ENCODE measurements at regions of chr11 and their contacts with region 1.

Region 1: DNA sequence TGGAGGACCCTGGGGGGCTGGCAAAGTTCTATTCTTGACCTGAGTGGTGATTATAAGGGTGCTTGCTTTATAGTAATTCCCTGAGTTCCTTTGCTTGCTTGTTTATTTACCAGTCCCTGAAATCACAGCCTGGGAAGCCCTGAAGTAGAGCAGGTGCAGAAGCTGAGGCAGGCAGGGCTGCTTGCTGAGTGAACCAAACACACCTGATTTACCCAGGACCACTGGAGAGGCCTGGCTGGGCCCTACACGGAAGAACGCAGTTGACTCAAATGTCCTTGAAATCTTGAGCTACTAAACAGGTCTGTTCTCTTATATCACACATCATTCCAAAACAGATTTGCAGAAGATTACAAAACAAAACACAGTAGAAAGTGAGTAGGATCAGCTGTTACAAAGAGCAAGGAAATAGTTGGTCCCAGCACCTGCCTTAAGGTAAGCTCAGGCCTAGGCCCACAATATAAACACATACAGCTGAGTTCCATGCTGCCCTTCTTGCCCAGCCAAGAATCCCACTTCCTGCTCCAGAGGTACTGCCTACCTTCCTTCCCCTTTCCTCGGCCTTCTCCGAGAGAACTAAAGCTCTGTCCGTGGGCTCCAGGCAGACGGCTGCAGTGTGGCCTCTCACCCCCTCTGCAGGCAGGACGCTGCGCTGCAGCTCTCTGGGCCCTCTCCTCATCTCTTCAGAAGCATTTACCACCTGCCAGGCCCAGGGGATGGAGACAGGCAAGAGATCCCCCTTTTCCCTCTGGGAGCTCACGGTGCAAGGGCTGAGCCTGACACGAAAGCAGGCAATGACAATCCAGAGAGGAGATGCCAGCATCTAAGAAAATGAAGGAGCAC is 46.1 kb upstream of the SCUBE2 start:
- DNase-seq: peak; percentile 68
- H3K4me3 ChIP-seq: no peak overlapping the region
- H3K27ac ChIP-seq: no peak overlapping the region
- H3K4me1 ChIP-seq: peaks cover 28% of the 10 kb centered on the region
- H3K27me3 ChIP-seq: no peaks in the 10 kb centered on the region
- CTCF ChIP-seq: peak; percentile 98 to 99

Region 2: DNA sequence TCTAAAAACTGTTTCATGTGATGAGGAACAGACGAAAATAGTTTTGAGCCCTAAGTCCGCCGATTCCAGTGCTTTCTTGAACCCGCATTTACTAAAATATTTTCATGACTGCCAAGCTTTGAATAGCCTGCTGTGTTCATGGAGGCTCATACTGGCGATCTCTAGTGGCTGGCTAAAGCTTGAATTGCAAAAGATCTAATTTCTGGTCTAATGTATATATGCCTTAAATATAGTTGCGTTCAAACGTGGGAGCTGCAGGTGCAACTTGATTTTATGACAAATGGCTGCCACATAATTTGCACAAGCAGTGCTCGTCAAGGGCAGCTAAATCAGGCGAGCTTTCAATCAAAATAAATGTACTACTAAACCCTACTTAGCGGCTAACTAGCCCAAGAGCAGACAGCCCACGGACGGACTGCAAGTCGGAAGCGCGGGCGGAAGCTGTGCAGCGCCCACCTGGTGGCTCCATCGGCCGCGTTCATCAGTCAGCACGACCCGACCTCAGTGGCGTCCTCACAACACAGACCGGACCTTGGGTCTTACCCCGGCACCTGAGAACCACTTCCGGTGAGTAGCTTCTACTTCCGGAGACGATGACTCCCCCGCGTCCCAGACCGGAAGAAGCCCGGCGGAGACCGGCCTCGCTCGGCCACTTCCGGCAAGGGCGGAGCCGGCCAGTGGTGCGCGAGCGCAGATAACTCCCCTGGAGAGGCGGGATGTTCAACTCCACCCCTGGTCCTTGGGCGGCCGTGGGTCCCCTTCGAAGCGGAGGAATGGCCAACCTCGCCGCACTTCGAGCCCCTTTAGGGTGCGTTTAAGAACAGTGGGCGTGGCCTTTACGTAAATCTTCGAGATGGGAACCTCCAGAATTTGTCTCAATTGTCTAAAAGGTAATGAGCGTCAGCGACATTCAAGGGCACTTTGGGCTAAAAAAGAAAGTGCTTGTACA is 448.8 kb before region 1 on chr11:
- CTCF ChIA-PET with region 1: no interaction called
- dilution Hi-C with region 1: no loop called
- in situ Hi-C with region 1: no loop called
- intact Hi-C with region 1: loop called (anchors 10 kb)
- DNase-seq: peak; percentile 95
- H3K4me3 ChIP-seq: peak overlapping the region; percentile 51 to 62 (median 52)
- H3K27ac ChIP-seq: peak overlapping the region; percentile 52
- H3K4me1 ChIP-seq: peaks cover 36% of the 10 kb centered on the region
- H3K27me3 ChIP-seq: no peaks in the 10 kb centered on the region
- CTCF ChIP-seq: peak in 1 of 2 donors; percentile 8

Region 3: GRCh38 chr11:9015677-9016076 is 121.8 kb before region 1 on chr11:
- CTCF ChIA-PET with region 1: interaction called, 37 read pairs
- dilution Hi-C with region 1: loop called (anchors 5 kb)
- in situ Hi-C with region 1: loop called in 1 of 2 experiments (anchors 5 kb)
- intact Hi-C with region 1: loop called (anchors 1 kb)
- DNase-seq: peak; percentile 60
- H3K4me3 ChIP-seq: no peak overlapping the region
- H3K27ac ChIP-seq: no peak overlapping the region
- H3K4me1 ChIP-seq: no peaks in the 10 kb centered on the region
- H3K27me3 ChIP-seq: no peaks in the 10 kb centered on the region
- CTCF ChIP-seq: peak; percentile 85 to 96

Region 4: GRCh38 chr11:9025101-9025850 is 112.2 kb before region 1 on chr11:
- CTCF ChIA-PET with region 1: no interaction called
- dilution Hi-C with region 1: no loop called
- in situ Hi-C with region 1: loop called in 1 of 2 experiments (anchors 5 kb)
- intact Hi-C with region 1: no loop called
- DNase-seq: no peak
- H3K4me3 ChIP-seq: no peak overlapping the region
- H3K27ac ChIP-seq: no peak overlapping the region
- H3K4me1 ChIP-seq: no peaks in the 10 kb centered on the region
- H3K27me3 ChIP-seq: no peaks in the 10 kb centered on the region
- CTCF ChIP-seq: no peak

Region 5: GRCh38 chr11:9078113-9079086 is 59.1 kb before region 1 on chr11:
- CTCF ChIA-PET with region 1: no interaction called
- dilution Hi-C with region 1: loop called (anchors 10 kb)
- in situ Hi-C with region 1: no loop called
- intact Hi-C with region 1: loop called (anchors 1 kb)
- DNase-seq: no peak
- H3K4me3 ChIP-seq: no peak overlapping the region
- H3K27ac ChIP-seq: no peak overlapping the region
- H3K4me1 ChIP-seq: peaks cover 44% of the 10 kb centered on the region
- H3K27me3 ChIP-seq: no peaks in the 10 kb centered on the region
- CTCF ChIP-seq: no peak

Region 6: GRCh38 chr11:9092853-9093778 is 44.4 kb before region 1 on chr11:
- CTCF ChIA-PET with region 1: interaction called, 16 read pairs
- dilution Hi-C with region 1: no loop called
- in situ Hi-C with region 1: no loop called
- intact Hi-C with region 1: loop called (anchors 5 kb)
- DNase-seq: no peak
- H3K4me3 ChIP-seq: no peak overlapping the region
- H3K27ac ChIP-seq: no peak overlapping the region
- H3K4me1 ChIP-seq: peaks cover 7% of the 10 kb centered on the region
- H3K27me3 ChIP-seq: no peaks in the 10 kb centered on the region
- CTCF ChIP-seq: peak in 1 of 2 donors; percentile 28

Measured in mammary epithelial cell (primary cell).